CD8-positive, alpha-beta memory T cell (primary cell): ENCODE measurements at regions of chr22 and their contacts with region 1.

Region 1: GRCh38 chr22:31096657-31097279 is 10.6 kb downstream of the SELENOM start:
- DNase-seq: no peak
- H3K4me3 ChIP-seq: no peak overlapping the region
- H3K4me3 Mint-ChIP-seq: no peak overlapping the region
- H3K27ac ChIP-seq: no peak overlapping the region
- H3K27ac Mint-ChIP-seq: peak overlapping the region in 1 of 8 donors; percentile 89
- H3K4me1 ChIP-seq: no peaks in the 10 kb centered on the region
- H3K4me1 Mint-ChIP-seq: no peaks in the 10 kb centered on the region
- H3K27me3 ChIP-seq: no peaks in the 10 kb centered on the region
- H3K27me3 Mint-ChIP-seq: no peaks in the 10 kb centered on the region

Region 2: DNA sequence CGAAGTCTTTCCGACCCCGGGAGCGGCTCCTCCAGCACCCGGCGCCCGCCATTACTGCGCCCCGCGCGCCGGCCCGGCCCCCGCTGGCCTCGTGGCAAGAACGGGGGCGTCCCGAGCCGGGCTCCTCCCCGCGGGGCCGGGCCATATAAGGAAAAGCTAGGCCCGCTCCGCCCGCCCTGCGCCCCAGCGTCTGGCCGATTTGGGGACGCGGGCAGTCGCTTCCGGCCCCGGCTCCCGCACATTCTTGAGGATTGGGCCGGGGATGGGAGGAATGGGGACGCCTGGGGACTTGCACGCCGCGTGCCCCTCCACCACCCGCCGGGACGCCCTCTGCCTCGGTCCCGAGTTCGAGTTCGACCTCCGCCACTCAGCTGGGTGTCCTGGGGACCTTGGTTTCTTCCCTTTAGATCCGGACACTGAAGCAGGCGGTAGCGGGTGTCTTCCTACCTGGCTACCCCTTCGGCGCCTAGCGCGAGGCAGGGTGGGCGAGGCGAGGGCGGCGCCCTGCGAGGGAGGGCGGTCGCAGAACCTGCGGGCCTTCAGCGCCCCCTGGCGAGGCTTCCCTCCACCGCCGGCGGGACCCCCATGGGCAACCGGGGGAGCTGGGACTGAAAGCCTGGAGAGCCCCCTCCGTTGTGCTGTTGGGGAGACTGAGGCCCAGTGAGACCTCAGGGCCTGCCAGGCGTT is 11.8 kb before region 1 on chr22:
- CTCF ChIA-PET with region 1: interaction called, 10 read pairs
- POLR2A ChIA-PET with region 1: no interaction called
- DNase-seq: peak; percentile 81 to 89 (median 84)
- H3K4me3 ChIP-seq: peak overlapping the region; percentile 69
- H3K4me3 Mint-ChIP-seq: peak overlapping the region; percentile 83 to 92 (median 86)
- H3K27ac ChIP-seq: peak overlapping the region; percentile 68
- H3K27ac Mint-ChIP-seq: peak overlapping the region; percentile 45 to 90 (median 78)
- H3K4me1 ChIP-seq: peaks cover 38% of the 10 kb centered on the region
- H3K4me1 Mint-ChIP-seq: peaks cover 29 to 42% (median 31%) of the 10 kb centered on the region in 3 donors
- H3K27me3 ChIP-seq: no peaks in the 10 kb centered on the region
- H3K27me3 Mint-ChIP-seq: no peaks in the 10 kb centered on the region

Region 3: GRCh38 chr22:31127181-31127772 is 30.5 kb after region 1 on chr22:
- CTCF ChIA-PET with region 1: no interaction called
- POLR2A ChIA-PET with region 1: no interaction called
- DNase-seq: no peak
- H3K4me3 ChIP-seq: no peak overlapping the region
- H3K4me3 Mint-ChIP-seq: no peak overlapping the region
- H3K27ac ChIP-seq: no peak overlapping the region
- H3K27ac Mint-ChIP-seq: no peak overlapping the region
- H3K4me1 ChIP-seq: no peaks in the 10 kb centered on the region
- H3K4me1 Mint-ChIP-seq: no peaks in the 10 kb centered on the region
- H3K27me3 ChIP-seq: no peaks in the 10 kb centered on the region
- H3K27me3 Mint-ChIP-seq: peaks cover 4 to 13% of the 10 kb centered on the region in 2 donors